AG04450 (cell line): ENCODE measurements at regions of chr12 and their contacts with region 1.

Region 1: GRCh38 chr12:54294152-54294952 is 6.5 kb downstream of the NFE2 start:
- DNase-seq: no peak
- H3K4me3 ChIP-seq: no peak overlapping the region
- H3K27ac ChIP-seq: no peak overlapping the region
- H3K27me3 ChIP-seq: peaks cover 13% of the 10 kb centered on the region
- CTCF ChIP-seq: peak; percentile 82

Region 2: GRCh38 chr12:54306925-54307741 is 12.8 kb after region 1 on chr12:
- CTCF ChIA-PET with region 1: interaction called, 13 read pairs
- POLR2A ChIA-PET with region 1: interaction called, 4 read pairs
- DNase-seq: no peak
- H3K4me3 ChIP-seq: no peak overlapping the region
- H3K27ac ChIP-seq: no peak overlapping the region
- H3K27me3 ChIP-seq: peaks cover 21% of the 10 kb centered on the region
- CTCF ChIP-seq: no peak

Region 3: GRCh38 chr12:54337280-54337842 is 43.0 kb after region 1 on chr12:
- CTCF ChIA-PET with region 1: interaction called, 10 read pairs
- POLR2A ChIA-PET with region 1: interaction called, 8 read pairs
- DNase-seq: no peak
- H3K4me3 ChIP-seq: no peak overlapping the region
- H3K27ac ChIP-seq: no peak overlapping the region
- H3K27me3 ChIP-seq: no peaks in the 10 kb centered on the region
- CTCF ChIP-seq: peak; percentile 11; the same call in 1 of the 2 replicates

Region 4: GRCh38 chr12:54475537-54475936 is 181.2 kb after region 1 on chr12:
- CTCF ChIA-PET with region 1: no interaction called
- POLR2A ChIA-PET with region 1: no interaction called
- DNase-seq: no peak
- H3K4me3 ChIP-seq: no peak overlapping the region
- H3K27ac ChIP-seq: no peak overlapping the region
- H3K27me3 ChIP-seq: peaks cover 4% of the 10 kb centered on the region
- CTCF ChIP-seq: no peak